ENCODE measurements at regions of chr3 and their contacts with region 1.

Region 1: DNA sequence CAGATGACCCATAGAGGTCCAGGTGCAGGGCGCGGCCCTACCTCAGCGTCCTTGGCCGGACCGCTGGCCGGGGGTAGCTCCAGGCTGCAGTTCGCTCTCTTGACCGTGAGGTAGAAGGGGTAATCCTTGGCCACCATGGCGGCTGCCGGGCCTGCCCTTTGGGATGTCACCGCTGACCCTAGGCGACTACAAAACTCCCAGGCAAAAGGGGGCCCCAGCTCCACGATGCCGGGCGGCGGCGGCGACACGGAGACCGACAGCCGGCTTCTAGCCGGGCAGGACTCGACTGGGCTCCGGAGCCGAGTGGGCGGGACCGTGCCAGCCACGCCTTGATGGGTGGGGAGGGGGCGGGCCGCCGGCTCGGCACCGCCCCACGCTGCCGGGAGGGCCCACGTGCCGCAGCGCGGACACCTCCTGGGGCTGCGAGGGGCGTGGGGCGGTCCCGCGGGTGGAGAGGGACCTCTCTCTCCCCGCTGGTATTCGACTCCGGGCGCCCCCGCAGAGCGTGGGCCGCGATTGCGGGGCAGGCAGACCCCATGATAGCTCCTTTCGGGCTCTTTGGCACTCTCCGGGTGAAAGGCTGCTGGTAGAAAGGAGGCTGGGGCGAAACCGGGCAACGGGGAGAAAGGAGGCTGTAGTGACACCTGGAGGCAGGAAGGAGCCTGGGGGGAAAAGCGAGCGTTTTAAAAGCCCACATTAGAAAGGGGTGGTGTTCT is at the start of gene ARHGEF3:
- DNase-seq: peak; percentile 94
- ATAC-seq: peak; percentile 78
- H3K4me3 Mint-ChIP-seq: peak within 1 kb of the TSS; percentile 92
- H3K27ac Mint-ChIP-seq: peak within 1 kb of the TSS; percentile 86
- H3K4me1 Mint-ChIP-seq: peaks cover 32% of the 10 kb centered on the region
- H3K27me3 Mint-ChIP-seq: no peaks in the 10 kb centered on the region
- total RNA-seq, gene ARHGEF3: 34.4 to 38.3 TPM

Region 2: GRCh38 chr3:56682462-56683121 is 119.2 kb before region 1 on chr3:
- CTCF ChIA-PET with region 1: interaction called, 5 read pairs
- POLR2A ChIA-PET with region 1: interaction called, 9 read pairs
- intact Hi-C with region 1: loop called in 1 of 2 experiments (anchors 1 kb)
- DNase-seq: peak; percentile 88
- ATAC-seq: peak; percentile 78
- H3K4me3 Mint-ChIP-seq: peak overlapping the region; percentile 92
- H3K27ac Mint-ChIP-seq: peak overlapping the region; percentile 94
- H3K4me1 Mint-ChIP-seq: peaks cover 38% of the 10 kb centered on the region
- H3K27me3 Mint-ChIP-seq: no peaks in the 10 kb centered on the region

Region 3: DNA sequence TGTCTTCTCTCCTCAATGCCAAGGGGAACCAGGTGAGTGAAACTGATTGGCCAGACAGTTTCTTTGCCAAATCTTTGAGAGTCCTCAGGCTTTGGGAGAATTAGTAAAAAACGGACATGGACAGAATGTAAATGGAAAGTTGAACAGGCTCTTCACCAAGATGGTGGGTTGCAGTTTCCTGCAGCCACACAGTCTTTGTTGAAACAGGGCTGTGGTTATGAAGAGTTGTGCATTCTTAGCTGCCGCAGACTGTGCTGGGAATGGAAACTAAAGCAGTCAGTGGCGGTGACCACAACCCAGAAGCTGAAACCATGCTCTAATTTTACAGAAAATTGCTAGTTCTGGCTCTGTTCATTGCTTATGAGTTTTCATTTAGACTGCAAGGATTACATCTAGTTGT is 76.6 kb before region 1 on chr3:
- CTCF ChIA-PET with region 1: interaction called, 17 read pairs
- POLR2A ChIA-PET with region 1: no interaction called
- intact Hi-C with region 1: no loop called
- DNase-seq: peak; percentile 82
- ATAC-seq: peak; percentile 94
- H3K4me3 Mint-ChIP-seq: peak overlapping the region; percentile 24
- H3K27ac Mint-ChIP-seq: peak overlapping the region; percentile 88
- H3K4me1 Mint-ChIP-seq: peaks cover 30% of the 10 kb centered on the region
- H3K27me3 Mint-ChIP-seq: no peaks in the 10 kb centered on the region

Region 4: DNA sequence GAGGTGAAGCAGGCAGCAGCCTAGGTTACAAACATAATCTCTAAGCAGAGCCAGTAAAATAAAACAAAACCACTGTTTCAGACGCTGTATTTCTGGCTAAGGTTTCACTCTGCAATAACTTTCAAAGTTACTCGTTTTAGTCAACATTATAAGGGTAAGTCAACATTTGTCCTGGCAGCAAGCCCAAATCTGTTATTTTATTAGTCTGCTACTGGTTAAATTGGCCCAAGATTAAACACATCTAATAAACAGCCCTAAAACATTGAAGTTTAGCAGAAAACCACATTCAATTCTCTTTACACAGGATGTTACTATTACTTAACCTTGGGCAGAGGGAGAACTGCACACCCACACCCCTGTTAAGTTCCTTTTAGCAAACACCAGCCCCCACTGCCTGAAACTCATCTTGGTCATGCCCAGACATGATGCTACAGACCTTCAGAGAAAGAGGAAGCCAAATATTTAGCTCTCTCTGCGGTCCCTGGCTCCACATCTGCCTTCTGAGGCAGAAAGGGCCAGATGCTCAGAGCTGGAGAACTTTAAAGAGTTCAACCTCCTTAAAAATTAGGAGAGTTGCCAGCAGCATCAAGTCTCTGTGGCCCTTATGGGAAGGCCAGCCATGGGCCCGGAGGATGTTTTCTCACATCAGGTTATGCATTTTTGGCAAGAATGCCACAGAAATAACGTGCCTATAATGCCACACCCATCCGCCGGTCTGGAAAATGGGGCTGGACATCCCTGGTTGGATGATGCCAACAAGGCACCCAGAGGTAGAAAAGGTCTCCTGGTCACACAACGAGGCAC is 18.0 kb before region 1 on chr3:
- CTCF ChIA-PET with region 1: interaction called, 270 read pairs
- POLR2A ChIA-PET with region 1: interaction called, 19 read pairs
- intact Hi-C with region 1: loop called in 1 of 2 experiments (anchors 2 kb)
- DNase-seq: peak; percentile 81
- ATAC-seq: peak; percentile 77
- H3K4me3 Mint-ChIP-seq: peak overlapping the region; percentile 65
- H3K27ac Mint-ChIP-seq: peak overlapping the region; percentile 97
- H3K4me1 Mint-ChIP-seq: peaks cover 98% of the 10 kb centered on the region
- H3K27me3 Mint-ChIP-seq: no peaks in the 10 kb centered on the region

Region 5: DNA sequence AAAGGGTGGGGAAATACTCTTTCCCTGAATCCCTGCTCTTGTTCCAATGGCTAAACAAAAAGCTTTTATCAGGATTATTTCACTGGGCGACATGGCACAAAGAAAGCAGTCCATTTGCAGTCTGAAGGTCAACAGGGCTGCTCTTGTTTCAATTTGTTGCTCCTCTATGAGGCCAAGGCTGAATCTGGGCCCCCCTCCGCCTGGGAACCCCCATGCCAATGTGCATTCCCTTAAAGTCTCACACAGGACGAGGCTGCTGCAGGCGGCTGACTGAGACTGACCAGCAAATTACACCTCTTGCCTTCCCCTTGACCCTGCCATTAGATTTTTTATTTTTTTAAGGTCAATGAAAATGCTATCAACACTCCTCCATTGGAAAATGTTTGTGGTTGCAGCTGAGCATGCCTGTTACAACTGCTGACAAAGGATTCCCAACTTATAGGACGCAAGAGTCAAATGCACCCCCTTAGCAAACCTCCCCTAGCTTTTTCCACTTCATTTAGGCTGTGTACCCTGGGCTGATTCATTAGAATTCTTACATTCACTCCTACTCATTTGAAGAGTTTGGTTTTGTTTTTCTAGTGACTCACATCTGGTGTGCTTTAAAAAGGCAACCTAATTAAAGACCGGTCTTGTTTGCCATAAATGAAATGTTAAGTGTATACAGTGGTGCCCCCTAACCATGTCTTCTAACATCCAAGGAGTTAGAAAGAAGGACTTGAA is 60.7 kb after region 1 on chr3:
- CTCF ChIA-PET with region 1: interaction called, 39 read pairs
- POLR2A ChIA-PET with region 1: interaction called, 4 read pairs
- intact Hi-C with region 1: loop called (anchors 1 to 2 kb)
- DNase-seq: peak; percentile 41
- ATAC-seq: peak; percentile 70
- H3K4me3 Mint-ChIP-seq: peak overlapping the region; percentile 32
- H3K27ac Mint-ChIP-seq: peak overlapping the region; percentile 85
- H3K4me1 Mint-ChIP-seq: peaks cover 80% of the 10 kb centered on the region
- H3K27me3 Mint-ChIP-seq: no peaks in the 10 kb centered on the region

Region 6: DNA sequence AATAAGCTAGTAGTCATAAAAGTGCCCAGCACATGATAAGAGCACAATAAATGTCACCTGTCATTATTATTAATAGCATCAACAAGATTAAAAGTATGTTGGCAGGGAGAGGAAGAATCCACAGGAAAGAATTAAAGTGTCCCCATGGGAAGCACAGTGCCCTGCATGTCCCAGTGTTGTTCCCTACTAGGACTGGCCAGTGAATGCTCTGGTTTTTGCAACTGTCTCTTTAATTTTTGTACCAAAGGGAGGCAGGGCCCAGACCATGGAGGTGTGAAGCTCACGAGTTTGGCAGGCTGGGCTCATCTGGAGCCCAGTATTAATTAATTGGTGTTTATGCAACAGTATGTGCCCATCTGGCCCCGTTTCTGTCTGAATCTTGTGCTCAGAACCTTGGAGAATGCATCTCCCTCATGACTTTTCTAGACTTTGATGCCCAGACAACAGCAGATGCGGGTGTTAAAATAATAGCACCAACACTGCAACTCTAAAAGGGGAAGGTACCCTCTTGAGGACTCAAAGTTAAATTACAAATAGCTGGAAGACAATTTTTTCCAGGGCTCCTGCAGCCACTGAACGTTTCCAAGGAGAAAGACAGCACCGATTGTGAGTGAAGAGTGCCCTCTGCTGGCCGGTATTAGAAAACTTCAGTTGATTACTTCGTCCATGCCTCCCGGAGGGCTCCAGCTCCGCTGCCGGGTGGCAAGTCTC is 186.8 kb after region 1 on chr3:
- CTCF ChIA-PET with region 1: interaction called, 124 read pairs
- POLR2A ChIA-PET with region 1: interaction called, 5 read pairs
- intact Hi-C with region 1: loop called (anchors 1 kb)
- DNase-seq: peak; percentile 84
- ATAC-seq: peak; percentile 72
- H3K4me3 Mint-ChIP-seq: no peak overlapping the region
- H3K27ac Mint-ChIP-seq: no peak overlapping the region
- H3K4me1 Mint-ChIP-seq: peaks cover 23% of the 10 kb centered on the region
- H3K27me3 Mint-ChIP-seq: peaks cover 12% of the 10 kb centered on the region